Activated naive CD4-positive, alpha-beta T cell treated with anti-CD3 and anti-CD28 coated beads for 36 hours (primary cell): ENCODE measurements at regions of chr6 and their contacts with region 1.

Region 1: DNA sequence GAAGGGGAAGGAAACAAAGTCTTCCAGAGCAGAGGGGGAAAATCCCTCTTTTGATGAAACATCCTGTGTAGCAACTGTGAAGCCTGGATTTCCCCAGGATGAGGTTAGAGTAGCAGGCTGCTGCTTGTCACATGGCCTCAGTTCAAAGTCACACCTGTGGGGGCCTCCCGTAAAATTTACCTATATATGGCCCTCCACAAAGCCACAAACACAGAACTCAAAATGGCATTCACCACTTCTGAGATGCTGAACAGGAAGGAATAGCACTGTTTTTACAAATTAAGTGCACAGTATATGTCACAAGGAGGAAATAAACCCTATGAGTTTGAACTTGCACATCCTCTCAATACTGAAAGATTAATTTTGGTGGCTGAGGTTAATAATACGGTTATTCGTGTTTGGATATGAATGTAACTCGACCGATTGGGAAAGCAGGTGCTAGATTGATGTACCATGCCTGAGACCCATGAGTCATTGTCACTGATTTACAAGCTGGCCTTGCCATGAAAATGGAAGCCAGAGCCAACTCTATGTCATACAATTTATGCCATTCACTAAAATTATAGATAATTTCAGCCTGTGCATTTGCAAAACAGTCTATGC is 70.6 kb downstream of the SGK1 start:
- DNase-seq: peak; percentile 94
- H3K4me3 Mint-ChIP-seq: peak overlapping the region; percentile 27
- H3K27ac Mint-ChIP-seq: peak overlapping the region; percentile 97
- H3K4me1 Mint-ChIP-seq: peaks cover 58% of the 10 kb centered on the region
- H3K27me3 Mint-ChIP-seq: no peaks in the 10 kb centered on the region

Region 2: GRCh38 chr6:134288538-134289203 is 41.3 kb after region 1 on chr6:
- CTCF ChIA-PET with region 1: interaction called, 5 read pairs
- intact Hi-C with region 1: loop called (anchors 1 kb)
- DNase-seq: no peak
- H3K4me3 Mint-ChIP-seq: peak overlapping the region; percentile 45
- H3K27ac Mint-ChIP-seq: peak overlapping the region; percentile 90
- H3K4me1 Mint-ChIP-seq: peaks cover 28% of the 10 kb centered on the region
- H3K27me3 Mint-ChIP-seq: no peaks in the 10 kb centered on the region

Region 3: DNA sequence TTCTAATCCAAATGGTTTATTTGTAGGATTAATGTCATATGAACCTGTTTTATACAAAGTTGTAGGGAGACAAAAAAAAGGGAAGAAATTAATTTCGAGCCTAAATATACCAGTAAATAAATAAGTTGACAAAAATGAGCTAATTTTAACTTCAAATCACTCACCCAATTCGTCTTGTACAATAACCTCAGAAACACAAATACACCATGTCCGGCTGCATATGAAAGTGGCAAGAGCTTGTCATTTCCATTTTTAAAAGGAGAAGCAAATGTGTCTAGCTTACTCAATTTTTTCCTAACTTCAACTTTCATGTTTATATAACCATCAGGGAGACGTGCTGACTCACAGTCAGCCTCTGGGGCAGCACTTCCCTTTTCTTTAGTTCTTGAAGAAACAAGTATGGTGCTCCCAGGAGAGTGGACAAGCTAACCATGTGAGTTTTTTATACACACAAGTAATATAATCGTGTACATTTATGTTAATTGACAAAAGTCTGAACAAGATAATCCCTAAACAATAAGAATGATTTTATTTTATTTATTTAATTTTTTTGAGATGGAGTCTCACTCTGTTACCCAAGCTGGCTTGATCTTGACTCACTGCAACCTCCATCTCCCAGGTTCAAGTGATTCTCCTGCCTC is 126.1 kb after region 1 on chr6:
- CTCF ChIA-PET with region 1: no interaction called
- intact Hi-C with region 1: loop called (anchors 1 kb)
- DNase-seq: peak; percentile 61
- H3K4me3 Mint-ChIP-seq: no peak overlapping the region
- H3K27ac Mint-ChIP-seq: peak overlapping the region; percentile 4
- H3K4me1 Mint-ChIP-seq: peaks cover 38% of the 10 kb centered on the region
- H3K27me3 Mint-ChIP-seq: no peaks in the 10 kb centered on the region

Region 4: GRCh38 chr6:134436281-134436815 is 189.0 kb after region 1 on chr6:
- CTCF ChIA-PET with region 1: interaction called, 4 read pairs
- intact Hi-C with region 1: loop called (anchors 1 kb)
- DNase-seq: peak; percentile 88
- H3K4me3 Mint-ChIP-seq: peak overlapping the region; percentile 44
- H3K27ac Mint-ChIP-seq: peak overlapping the region; percentile 86
- H3K4me1 Mint-ChIP-seq: peaks cover 31% of the 10 kb centered on the region
- H3K27me3 Mint-ChIP-seq: no peaks in the 10 kb centered on the region

Region 5: DNA sequence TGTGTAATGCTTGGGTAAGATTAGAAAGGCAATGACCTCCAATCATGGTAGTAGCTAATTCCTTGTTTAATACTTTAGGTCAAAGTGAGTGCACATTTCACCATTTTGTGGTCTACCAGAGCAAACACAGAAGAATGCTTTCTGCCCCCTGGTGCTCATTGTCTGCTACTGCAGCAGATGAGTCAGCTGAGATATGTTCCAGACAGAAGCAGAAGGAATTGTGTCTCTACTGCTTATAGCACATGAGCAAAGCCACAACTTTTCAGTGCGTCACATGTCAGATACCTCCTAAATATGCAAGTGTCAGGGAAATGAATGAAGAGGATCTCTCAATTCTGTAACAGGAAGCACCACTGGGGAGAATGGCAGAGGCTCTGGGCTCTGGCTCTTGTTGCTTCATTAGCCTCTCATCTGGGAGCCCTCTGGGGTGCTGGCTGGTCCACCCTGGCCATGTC is 393.7 kb after region 1 on chr6:
- CTCF ChIA-PET with region 1: interaction called, 6 read pairs
- intact Hi-C with region 1: loop called (anchors 1 kb)
- DNase-seq: peak; percentile 91
- H3K4me3 Mint-ChIP-seq: no peak overlapping the region
- H3K27ac Mint-ChIP-seq: peak overlapping the region; percentile 57
- H3K4me1 Mint-ChIP-seq: peaks cover 34% of the 10 kb centered on the region
- H3K27me3 Mint-ChIP-seq: no peaks in the 10 kb centered on the region

Region 6: DNA sequence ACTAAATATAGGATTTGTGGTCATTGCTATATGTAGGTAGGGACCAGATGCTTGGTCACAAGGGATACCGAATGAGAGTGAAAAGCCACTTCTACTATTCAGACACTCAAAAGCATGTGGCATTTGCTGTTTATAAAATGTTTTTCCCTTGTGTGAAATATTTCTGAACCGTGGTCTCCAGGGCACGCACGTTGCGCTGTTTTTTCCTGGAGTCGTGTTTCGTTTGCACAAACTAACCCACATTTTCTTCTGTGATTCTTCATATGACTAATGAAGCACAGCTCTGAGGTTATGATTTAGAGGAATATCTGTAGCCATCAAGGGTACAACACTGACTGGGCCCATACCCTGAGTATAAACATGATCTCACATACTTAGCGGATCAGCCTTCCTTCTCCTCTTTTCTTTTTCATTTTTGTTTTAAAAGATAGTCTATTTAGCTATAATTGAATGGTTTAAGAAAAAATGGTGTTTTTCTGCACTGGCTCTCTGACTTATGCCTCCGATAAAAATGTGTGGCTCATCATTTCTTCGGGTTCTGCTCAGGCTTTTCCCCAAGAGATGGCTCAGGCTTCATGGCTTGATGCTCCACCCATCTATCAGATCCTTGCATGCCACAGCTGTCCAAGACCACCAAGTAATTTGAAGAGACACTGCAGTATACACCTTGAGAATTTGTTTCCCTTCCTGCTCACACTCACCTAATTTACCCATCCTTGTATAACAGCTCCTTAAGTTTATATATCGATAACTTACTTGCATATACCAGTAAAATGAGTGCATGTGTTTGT is 867.2 kb after region 1 on chr6:
- CTCF ChIA-PET with region 1: no interaction called
- intact Hi-C with region 1: loop called (anchors 1 kb)
- DNase-seq: peak; percentile 75
- H3K4me3 Mint-ChIP-seq: no peak overlapping the region
- H3K27ac Mint-ChIP-seq: peak overlapping the region; percentile 74
- H3K4me1 Mint-ChIP-seq: peaks cover 72% of the 10 kb centered on the region
- H3K27me3 Mint-ChIP-seq: no peaks in the 10 kb centered on the region